ENCODE measurements at regions of chr22 and their contacts with region 1.

Region 1: DNA sequence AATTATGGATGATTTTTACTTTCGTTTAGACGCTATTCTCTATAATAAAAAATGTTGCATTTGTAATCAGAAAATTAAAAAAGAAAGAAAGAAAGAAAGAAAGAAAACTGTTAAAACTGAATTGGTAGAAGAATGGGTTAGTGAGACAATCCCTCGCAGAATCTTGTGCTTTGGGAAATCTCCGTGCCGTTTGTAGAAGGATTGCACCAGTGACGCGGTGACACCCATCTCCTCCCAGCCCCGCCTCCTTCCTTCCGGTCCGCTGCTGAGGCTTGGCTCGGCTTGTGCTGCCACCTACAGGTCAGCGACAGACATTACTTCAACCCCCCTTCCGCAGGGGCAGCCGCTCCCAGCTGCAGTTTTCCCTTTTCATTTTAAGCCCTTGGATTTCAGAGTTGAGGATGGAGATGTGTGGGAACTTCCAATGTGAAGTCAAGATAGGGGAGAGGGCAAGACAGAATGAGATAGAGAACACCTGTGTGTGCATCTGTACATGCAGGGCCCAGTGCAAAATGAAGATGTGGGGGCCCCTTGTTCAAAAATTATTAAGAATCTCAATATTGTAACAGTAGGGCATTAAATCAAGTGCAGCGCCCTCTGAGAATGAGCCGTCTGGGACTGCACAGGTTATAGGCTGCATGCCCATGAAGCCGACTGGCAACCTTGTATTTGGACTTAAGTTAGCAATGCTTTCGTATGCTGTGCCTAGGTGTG is 41.1 kb downstream of the TST start:
- DNase-seq: peak; percentile 85 to 90
- H3K4me3 ChIP-seq: peak overlapping the region; percentile 24
- H3K4me3 Mint-ChIP-seq: peak overlapping the region; percentile 69
- H3K27ac Mint-ChIP-seq: peak overlapping the region; percentile 26
- H3K4me1 ChIP-seq: no peaks in the 10 kb centered on the region
- H3K4me1 Mint-ChIP-seq: no peaks in the 10 kb centered on the region
- H3K27me3 ChIP-seq: no peaks in the 10 kb centered on the region
- H3K27me3 Mint-ChIP-seq: peaks cover 11% of the 10 kb centered on the region
- CTCF ChIP-seq: peak; percentile 82 to 86

Region 2: GRCh38 chr22:36775964-36776669 is 202.0 kb before region 1 on chr22 and contains the start of gene IFT27:
- CTCF ChIA-PET with region 1: interaction called, 11 read pairs
- POLR2A ChIA-PET with region 1: no interaction called
- intact Hi-C with region 1: no loop called
- DNase-seq: peak; percentile 97 to 99
- H3K4me3 ChIP-seq: peak within 1 kb of the TSS; percentile 68
- H3K4me3 Mint-ChIP-seq: peak within 1 kb of the TSS; percentile 81
- H3K27ac Mint-ChIP-seq: peak within 1 kb of the TSS; percentile 57
- H3K4me1 ChIP-seq: 0 out of 2 replicates have a peak, but pooled peaks cover 5% of the 10 kb centered on the region
- H3K4me1 Mint-ChIP-seq: peaks cover 5% of the 10 kb centered on the region
- H3K27me3 ChIP-seq: no peaks in the 10 kb centered on the region
- H3K27me3 Mint-ChIP-seq: peaks cover 4% of the 10 kb centered on the region
- CTCF ChIP-seq: no peak
- total RNA-seq, gene IFT27: 8.3 and 9.2 TPM in 2 replicates

Region 3: GRCh38 chr22:36781656-36782627 is 196.2 kb before region 1 on chr22:
- CTCF ChIA-PET with region 1: no interaction called
- POLR2A ChIA-PET with region 1: no interaction called
- intact Hi-C with region 1: loop called (anchors 1 kb)
- DNase-seq: peak; percentile 70 to 84
- H3K4me3 ChIP-seq: no peak overlapping the region
- H3K4me3 Mint-ChIP-seq: no peak overlapping the region
- H3K27ac Mint-ChIP-seq: no peak overlapping the region
- H3K4me1 ChIP-seq: no peaks in the 10 kb centered on the region
- H3K4me1 Mint-ChIP-seq: no peaks in the 10 kb centered on the region
- H3K27me3 ChIP-seq: no peaks in the 10 kb centered on the region
- H3K27me3 Mint-ChIP-seq: peaks cover 31% of the 10 kb centered on the region
- CTCF ChIP-seq: peak; percentile 87 to 90

Region 4: DNA sequence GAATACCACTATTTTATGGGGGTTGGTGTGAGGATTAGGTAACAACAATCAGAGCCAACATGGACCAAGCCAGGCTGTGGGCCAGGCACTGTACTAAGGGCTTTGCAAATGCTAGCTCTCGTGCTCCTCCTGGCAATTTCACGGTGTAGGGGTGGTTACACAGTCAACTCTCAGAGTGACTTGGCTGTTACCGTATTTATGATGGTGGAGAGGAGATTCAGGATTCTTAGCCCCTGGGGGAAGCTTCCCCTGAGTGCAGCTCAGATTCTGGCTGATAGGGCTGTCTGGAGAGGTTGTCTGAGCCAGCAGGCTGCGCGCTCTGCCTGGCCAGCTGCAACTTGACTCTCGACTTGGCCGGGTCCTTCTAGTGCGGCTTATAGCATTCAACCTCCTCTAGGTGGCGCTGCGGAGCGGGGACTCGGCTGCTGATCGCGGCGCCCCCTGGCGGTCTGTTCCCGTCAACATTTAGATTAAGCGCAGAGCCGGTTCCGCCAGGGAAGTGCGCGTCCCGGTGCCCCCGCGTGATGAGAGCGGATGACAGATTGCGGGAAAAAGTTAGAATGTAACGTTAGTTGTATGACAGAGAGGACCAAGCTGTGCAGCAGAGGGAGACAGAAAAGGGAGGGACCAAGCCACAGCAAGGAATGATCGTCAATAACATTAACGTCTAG is 121.8 kb before region 1 on chr22:
- CTCF ChIA-PET with region 1: interaction called, 5 read pairs
- POLR2A ChIA-PET with region 1: no interaction called
- intact Hi-C with region 1: loop called (anchors 1 kb)
- DNase-seq: peak; percentile 73 to 92
- H3K4me3 ChIP-seq: no peak overlapping the region
- H3K4me3 Mint-ChIP-seq: no peak overlapping the region
- H3K27ac Mint-ChIP-seq: no peak overlapping the region
- H3K4me1 ChIP-seq: no peaks in the 10 kb centered on the region
- H3K4me1 Mint-ChIP-seq: peaks cover 6% of the 10 kb centered on the region
- H3K27me3 ChIP-seq: peaks cover 1% of the 10 kb centered on the region; the same call in 1 of the 2 replicates
- H3K27me3 Mint-ChIP-seq: peaks cover 9% of the 10 kb centered on the region
- CTCF ChIP-seq: peak; percentile 100

Region 5: GRCh38 chr22:36873680-36874537 is 104.2 kb before region 1 on chr22:
- CTCF ChIA-PET with region 1: no interaction called
- POLR2A ChIA-PET with region 1: no interaction called
- intact Hi-C with region 1: loop called (anchors 1 kb)
- DNase-seq: peak; percentile 53 to 60
- H3K4me3 ChIP-seq: no peak overlapping the region
- H3K4me3 Mint-ChIP-seq: no peak overlapping the region
- H3K27ac Mint-ChIP-seq: no peak overlapping the region
- H3K4me1 ChIP-seq: no peaks in the 10 kb centered on the region
- H3K4me1 Mint-ChIP-seq: no peaks in the 10 kb centered on the region
- H3K27me3 ChIP-seq: no peaks in the 10 kb centered on the region
- H3K27me3 Mint-ChIP-seq: peaks cover 7% of the 10 kb centered on the region
- CTCF ChIP-seq: peak; percentile 33 to 58

Region 6: GRCh38 chr22:37010976-37011375 is 32.9 kb after region 1 on chr22:
- CTCF ChIA-PET with region 1: no interaction called
- POLR2A ChIA-PET with region 1: interaction called, 17 read pairs
- intact Hi-C with region 1: no loop called
- DNase-seq: no peak
- H3K4me3 ChIP-seq: no peak overlapping the region
- H3K4me3 Mint-ChIP-seq: no peak overlapping the region
- H3K27ac Mint-ChIP-seq: no peak overlapping the region
- H3K4me1 ChIP-seq: 0 out of 2 replicates have a peak, but pooled peaks cover 4% of the 10 kb centered on the region
- H3K4me1 Mint-ChIP-seq: peaks cover 4% of the 10 kb centered on the region
- H3K27me3 ChIP-seq: no peaks in the 10 kb centered on the region; the same call in 1 of the 2 replicates
- H3K27me3 Mint-ChIP-seq: peaks cover 2% of the 10 kb centered on the region
- CTCF ChIP-seq: no peak

Region 7: DNA sequence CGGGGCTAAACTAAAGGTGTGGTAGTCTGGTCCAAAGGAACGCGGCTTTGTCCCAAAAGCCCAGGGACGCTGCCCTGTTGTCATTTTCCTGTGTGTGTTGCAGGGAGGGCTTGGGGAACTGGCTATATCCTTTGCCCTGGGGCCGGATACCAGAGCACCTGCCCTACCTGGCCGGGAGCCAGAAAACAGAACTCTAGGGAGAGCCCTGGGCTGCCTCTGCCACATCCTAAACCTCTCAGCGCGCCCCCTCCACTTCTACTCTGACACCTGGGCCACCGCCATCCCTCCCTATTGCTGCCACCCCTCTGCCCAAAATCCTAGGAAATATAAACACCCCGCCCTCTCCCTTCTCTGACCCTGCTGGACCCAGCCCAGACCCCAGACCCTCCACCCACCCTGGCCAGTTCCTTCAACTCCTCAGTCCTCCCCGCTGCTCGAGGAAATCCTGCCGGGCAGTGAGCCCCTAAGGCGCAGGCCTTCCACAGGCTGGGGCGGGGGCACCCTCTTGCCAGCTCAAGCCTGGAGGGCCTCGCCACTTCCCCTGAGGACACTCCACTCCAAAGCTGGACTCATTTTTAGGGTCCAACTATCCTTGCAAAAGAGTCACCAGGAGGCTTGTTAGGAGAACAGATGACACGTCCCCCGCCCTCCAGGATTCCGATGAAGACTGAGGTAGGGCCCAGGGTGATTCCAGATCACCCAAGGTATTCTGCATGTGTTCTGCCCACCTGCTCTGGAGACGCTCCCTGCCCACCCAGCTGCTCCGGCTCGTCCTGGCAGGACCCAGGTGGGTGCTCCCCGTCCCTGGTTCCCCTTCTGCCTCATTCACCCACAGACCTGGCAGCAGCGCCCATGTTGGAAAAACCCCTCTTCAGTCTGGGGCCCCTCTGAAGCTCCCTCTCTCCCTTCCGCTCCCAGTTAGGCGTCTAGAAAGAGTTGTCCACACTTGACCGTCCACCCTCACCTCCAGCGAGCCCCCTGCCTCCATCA is 85.6 kb after region 1 on chr22:
- CTCF ChIA-PET with region 1: no interaction called
- POLR2A ChIA-PET with region 1: no interaction called
- intact Hi-C with region 1: no loop called
- DNase-seq: no peak
- H3K4me3 ChIP-seq: no peak overlapping the region
- H3K4me3 Mint-ChIP-seq: no peak overlapping the region
- H3K27ac Mint-ChIP-seq: no peak overlapping the region
- H3K4me1 ChIP-seq: peaks cover 6% of the 10 kb centered on the region; the same call in 1 of the 2 replicates
- H3K4me1 Mint-ChIP-seq: no peaks in the 10 kb centered on the region
- H3K27me3 ChIP-seq: no peaks in the 10 kb centered on the region
- H3K27me3 Mint-ChIP-seq: no peaks in the 10 kb centered on the region
- CTCF ChIP-seq: no peak

Measured in Caco-2 (cell line).